Naive thymus-derived CD4-positive, alpha-beta T cell (primary cell): ENCODE measurements at regions of chr19 and their contacts with region 1.

Region 1: DNA sequence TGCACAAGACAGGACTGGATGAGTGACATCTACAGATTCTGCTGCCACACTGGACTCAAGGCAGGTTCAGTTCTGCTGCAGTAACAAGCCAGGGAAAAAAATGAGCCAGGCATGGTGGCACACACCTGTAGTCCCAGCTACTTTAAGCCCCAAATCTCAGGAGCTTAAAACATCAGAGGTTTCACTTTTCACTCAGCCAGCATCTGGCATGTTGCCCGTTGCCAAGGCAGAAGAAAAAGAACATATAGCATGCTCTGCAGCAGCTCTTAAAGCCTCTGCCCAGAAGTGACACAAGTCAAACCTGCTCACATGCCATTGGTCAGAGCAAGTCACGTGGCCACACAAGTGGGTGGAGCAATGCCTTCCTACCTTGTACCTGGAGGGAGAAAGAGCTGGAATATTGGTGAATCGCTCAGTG is 14.7 kb upstream of the ADGRE5 start:
- DNase-seq: peak; percentile 76 to 96 (median 93)
- ATAC-seq: peak; percentile 68
- H3K4me3 ChIP-seq: peak overlapping the region; percentile 44
- H3K4me3 Mint-ChIP-seq: peak overlapping the region; percentile 54 to 90 (median 78)
- H3K27ac ChIP-seq: peak overlapping the region; percentile 99
- H3K27ac Mint-ChIP-seq: peak overlapping the region; percentile 93 to 100 (median 98)
- H3K4me1 ChIP-seq: peaks cover 55 to 80% of the 10 kb centered on the region in 2 donors
- H3K4me1 Mint-ChIP-seq: peaks cover 53 to 81% (median 65%) of the 10 kb centered on the region in 7 donors
- H3K27me3 ChIP-seq: no peaks in the 10 kb centered on the region
- H3K27me3 Mint-ChIP-seq: no peaks in the 10 kb centered on the region

Region 2: GRCh38 chr19:12782229-12783028 is 1584.1 kb before region 1 on chr19:
- CTCF ChIA-PET with region 1: no interaction called
- POLR2A ChIA-PET with region 1: no interaction called
- intact Hi-C with region 1: loop called in 1 of 2 experiments (anchors 5 kb)
- DNase-seq: peak; percentile 93 to 99 (median 98)
- ATAC-seq: peak; percentile 81
- H3K4me3 ChIP-seq: peak overlapping the region; percentile 58
- H3K4me3 Mint-ChIP-seq: peak overlapping the region; percentile 76 to 96 (median 86)
- H3K27ac ChIP-seq: peak overlapping the region; percentile 98
- H3K27ac Mint-ChIP-seq: peak overlapping the region in 4 of 9 donors; percentile 88 to 99 (median 93)
- H3K4me1 ChIP-seq: peaks cover 33 to 58% of the 10 kb centered on the region in 2 donors
- H3K4me1 Mint-ChIP-seq: peaks cover 14 to 42% (median 33%) of the 10 kb centered on the region in 7 donors
- H3K27me3 ChIP-seq: no peaks in the 10 kb centered on the region
- H3K27me3 Mint-ChIP-seq: no peaks in the 10 kb centered on the region

Region 3: DNA sequence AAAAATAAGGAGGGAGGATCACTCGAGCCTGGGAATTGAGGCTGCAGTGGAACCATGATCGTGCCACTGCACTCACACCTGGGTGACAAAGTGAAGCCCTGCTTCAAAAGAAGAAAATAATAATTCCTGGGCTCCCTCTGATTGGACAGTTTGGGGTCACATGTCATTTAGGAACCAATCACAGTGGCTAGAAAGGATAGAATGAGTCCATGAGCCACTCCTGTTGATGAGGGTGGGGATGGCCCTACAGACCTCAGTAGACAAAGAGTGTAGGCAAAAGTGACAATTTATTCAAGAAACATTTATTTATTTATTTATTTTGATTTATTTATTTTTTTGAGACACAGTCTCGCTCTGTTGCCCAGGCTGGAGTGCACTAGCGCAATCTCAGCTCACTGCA is 12.1 kb before region 1 on chr19:
- CTCF ChIA-PET with region 1: interaction called, 9 read pairs
- POLR2A ChIA-PET with region 1: interaction called, 9 read pairs
- intact Hi-C with region 1: loop called (anchors 1 to 2 kb)
- DNase-seq: no peak
- ATAC-seq: no peak
- H3K4me3 ChIP-seq: no peak overlapping the region
- H3K4me3 Mint-ChIP-seq: peak overlapping the region in 1 of 10 donors; percentile 13
- H3K27ac ChIP-seq: peak overlapping the region; percentile 7
- H3K27ac Mint-ChIP-seq: peak overlapping the region in 5 of 9 donors; percentile 25 to 99 (median 95)
- H3K4me1 ChIP-seq: peaks cover 13 to 32% of the 10 kb centered on the region in 2 donors
- H3K4me1 Mint-ChIP-seq: peaks cover 27 to 51% (median 40%) of the 10 kb centered on the region in 7 donors
- H3K27me3 ChIP-seq: no peaks in the 10 kb centered on the region
- H3K27me3 Mint-ChIP-seq: no peaks in the 10 kb centered on the region

Region 4: GRCh38 chr19:14383661-14384555 is 17.4 kb after region 1 on chr19:
- CTCF ChIA-PET with region 1: interaction called, 82 read pairs
- POLR2A ChIA-PET with region 1: interaction called, 433 read pairs
- intact Hi-C with region 1: loop called (anchors 1 kb)
- DNase-seq: peak in 2 of 9 donors; percentile 69 to 81
- ATAC-seq: peak; percentile 4
- H3K4me3 ChIP-seq: peak overlapping the region; percentile 95
- H3K4me3 Mint-ChIP-seq: peak overlapping the region; percentile 89 to 100 (median 94)
- H3K27ac ChIP-seq: peak overlapping the region; percentile 98
- H3K27ac Mint-ChIP-seq: peak overlapping the region; percentile 96 to 99 (median 97)
- H3K4me1 ChIP-seq: peaks cover 24 to 28% of the 10 kb centered on the region in 2 donors
- H3K4me1 Mint-ChIP-seq: peaks cover 36 to 51% (median 47%) of the 10 kb centered on the region in 7 donors
- H3K27me3 ChIP-seq: no peaks in the 10 kb centered on the region
- H3K27me3 Mint-ChIP-seq: peaks cover 0 to 3% (median 0%) of the 10 kb centered on the region in 5 donors

Region 5: GRCh38 chr19:14405758-14406644 is 39.5 kb after region 1 on chr19:
- CTCF ChIA-PET with region 1: interaction called, 81 read pairs
- POLR2A ChIA-PET with region 1: interaction called, 15 read pairs
- intact Hi-C with region 1: loop called (anchors 1 kb)
- DNase-seq: peak; percentile 85 to 96 (median 91)
- ATAC-seq: peak; percentile 76
- H3K4me3 ChIP-seq: no peak overlapping the region
- H3K4me3 Mint-ChIP-seq: peak overlapping the region in 1 of 10 donors; percentile 12
- H3K27ac ChIP-seq: peak overlapping the region; percentile 54
- H3K27ac Mint-ChIP-seq: peak overlapping the region; percentile 58 to 85 (median 60)
- H3K4me1 ChIP-seq: peaks cover 8 to 25% of the 10 kb centered on the region in 2 donors
- H3K4me1 Mint-ChIP-seq: peaks cover 6 to 26% (median 20%) of the 10 kb centered on the region in 7 donors
- H3K27me3 ChIP-seq: no peaks in the 10 kb centered on the region
- H3K27me3 Mint-ChIP-seq: no peaks in the 10 kb centered on the region

Region 6: DNA sequence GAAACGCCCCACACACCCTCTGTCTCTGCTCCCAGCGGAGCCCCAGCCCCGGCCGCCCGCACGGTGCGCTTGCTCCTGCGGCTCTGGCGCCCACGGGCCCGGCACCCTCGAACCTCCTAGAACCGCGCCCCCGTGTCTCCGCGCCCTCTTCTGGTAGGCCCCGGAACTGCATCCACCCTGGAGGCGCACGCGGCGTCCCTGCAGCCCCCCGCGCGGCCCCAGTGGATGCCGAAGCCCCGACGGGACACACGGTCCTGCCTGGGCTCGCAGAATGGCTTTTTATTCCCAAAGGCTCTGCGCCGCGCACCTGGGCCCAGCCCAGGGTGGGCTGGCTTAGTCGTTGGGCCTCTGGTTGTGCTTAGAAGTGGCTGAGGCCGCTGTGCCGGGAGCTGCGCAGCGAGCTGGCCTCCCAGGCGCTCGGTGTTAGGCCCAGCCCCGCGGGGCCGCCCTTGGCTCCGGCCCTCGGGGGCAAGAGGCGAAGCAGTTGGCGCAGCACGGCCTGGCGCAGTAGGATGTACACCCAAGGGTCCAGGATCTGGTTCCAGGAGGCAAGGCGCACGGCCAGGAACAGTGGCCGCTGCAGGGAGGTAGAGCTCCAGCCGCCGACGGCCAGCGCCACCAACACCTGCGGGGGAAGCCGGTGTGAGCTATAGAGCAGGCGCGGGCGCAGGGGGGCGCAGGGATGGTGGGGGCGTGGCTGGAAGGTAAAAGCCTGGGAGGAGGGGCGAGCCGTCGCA is 105.9 kb after region 1 on chr19:
- CTCF ChIA-PET with region 1: interaction called, 5 read pairs
- POLR2A ChIA-PET with region 1: no interaction called
- intact Hi-C with region 1: loop called in 1 of 2 experiments (anchors 1 kb)
- DNase-seq: peak; percentile 65 to 94 (median 82)
- ATAC-seq: peak; percentile 85
- H3K4me3 ChIP-seq: peak overlapping the region; percentile 55
- H3K4me3 Mint-ChIP-seq: peak overlapping the region; percentile 25 to 84 (median 68)
- H3K27ac ChIP-seq: no peak overlapping the region
- H3K27ac Mint-ChIP-seq: peak overlapping the region in 1 of 9 donors; percentile 41
- H3K4me1 ChIP-seq: peaks cover 4 to 17% of the 10 kb centered on the region in 2 donors
- H3K4me1 Mint-ChIP-seq: peaks cover 0 to 39% (median 29%) of the 10 kb centered on the region in 7 donors
- H3K27me3 ChIP-seq: peaks cover 0 to 4% of the 10 kb centered on the region in 2 donors
- H3K27me3 Mint-ChIP-seq: peaks cover 6 to 19% (median 12%) of the 10 kb centered on the region in 5 donors

Region 7: GRCh38 chr19:14505488-14506432 is 139.3 kb after region 1 on chr19:
- CTCF ChIA-PET with region 1: interaction called, 3 read pairs
- POLR2A ChIA-PET with region 1: interaction called, 5 read pairs
- intact Hi-C with region 1: loop called in 1 of 2 experiments (anchors 5 kb)
- DNase-seq: peak; percentile 62 to 79 (median 71)
- ATAC-seq: peak; percentile 68
- H3K4me3 ChIP-seq: no peak overlapping the region
- H3K4me3 Mint-ChIP-seq: peak overlapping the region; percentile 13 to 84 (median 65)
- H3K27ac ChIP-seq: peak overlapping the region; percentile 70
- H3K27ac Mint-ChIP-seq: peak overlapping the region; percentile 96 to 100 (median 97)
- H3K4me1 ChIP-seq: peaks cover 29 to 50% of the 10 kb centered on the region in 2 donors
- H3K4me1 Mint-ChIP-seq: peaks cover 43 to 78% (median 69%) of the 10 kb centered on the region in 7 donors
- H3K27me3 ChIP-seq: no peaks in the 10 kb centered on the region
- H3K27me3 Mint-ChIP-seq: peaks cover 0 to 7% (median 0%) of the 10 kb centered on the region in 5 donors